Ovary (tissue), 10 donors: ENCODE measurements at regions of chr18 and their contacts with region 1.

Region 1: DNA sequence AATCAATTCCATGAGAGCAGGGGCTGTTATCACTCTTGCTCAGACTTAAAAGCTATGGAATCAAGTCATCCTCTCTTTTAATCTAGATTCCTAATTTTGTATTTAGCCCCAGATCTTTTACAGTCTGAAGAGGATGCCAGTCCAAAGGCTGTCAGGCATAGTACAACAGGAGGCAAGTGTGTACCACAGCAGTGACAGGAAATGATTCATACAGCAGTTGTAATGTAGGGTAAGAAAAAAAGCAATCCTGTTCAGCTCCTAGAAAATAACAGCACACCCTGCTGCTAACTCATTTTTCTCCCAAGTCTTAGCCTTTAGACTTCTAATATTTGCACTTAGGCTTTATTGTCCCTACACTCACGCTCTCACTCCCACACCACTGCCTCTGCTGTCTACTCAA is 127.8 kb upstream of the SYT4 start:
- DNase-seq: no peak
- H3K4me3 ChIP-seq: no peak overlapping the region
- H3K27ac ChIP-seq: no peak overlapping the region
- H3K4me1 ChIP-seq: no peaks in the 10 kb centered on the region
- H3K27me3 ChIP-seq: no peaks in the 10 kb centered on the region
- CTCF ChIP-seq: no peak
- EP300 ChIP-seq: no peak
- POLR2A ChIP-seq: no peak

Region 2: GRCh38 chr18:42298759-42299675 is 1106.1 kb before region 1 on chr18:
- intact Hi-C with region 1: loop called in 1 of 4 experiments (anchors 10 kb)
- DNase-seq: peak; percentile 49 to 82 (median 73)
- H3K4me3 ChIP-seq: peak overlapping the region; percentile 13
- H3K27ac ChIP-seq: peak overlapping the region in 1 of 2 donors; percentile 69
- H3K4me1 ChIP-seq: peaks cover 2% of the 10 kb centered on the region
- H3K27me3 ChIP-seq: no peaks in the 10 kb centered on the region
- CTCF ChIP-seq: peak; percentile 64 to 82 (median 68)
- EP300 ChIP-seq: no peak
- POLR2A ChIP-seq: no peak